Mammary epithelial cell (primary cell): ENCODE measurements at regions of chr12 and their contacts with region 1.

Region 1: GRCh38 chr12:94101738-94102660 is 46.4 kb upstream of the PLXNC1 start:
- DNase-seq: peak; percentile 80
- H3K4me3 ChIP-seq: peak overlapping the region; percentile 50 to 66 (median 59)
- H3K27ac ChIP-seq: no peak overlapping the region
- H3K4me1 ChIP-seq: peaks cover 28% of the 10 kb centered on the region
- H3K27me3 ChIP-seq: no peaks in the 10 kb centered on the region
- CTCF ChIP-seq: peak; percentile 77 to 83

Region 2: DNA sequence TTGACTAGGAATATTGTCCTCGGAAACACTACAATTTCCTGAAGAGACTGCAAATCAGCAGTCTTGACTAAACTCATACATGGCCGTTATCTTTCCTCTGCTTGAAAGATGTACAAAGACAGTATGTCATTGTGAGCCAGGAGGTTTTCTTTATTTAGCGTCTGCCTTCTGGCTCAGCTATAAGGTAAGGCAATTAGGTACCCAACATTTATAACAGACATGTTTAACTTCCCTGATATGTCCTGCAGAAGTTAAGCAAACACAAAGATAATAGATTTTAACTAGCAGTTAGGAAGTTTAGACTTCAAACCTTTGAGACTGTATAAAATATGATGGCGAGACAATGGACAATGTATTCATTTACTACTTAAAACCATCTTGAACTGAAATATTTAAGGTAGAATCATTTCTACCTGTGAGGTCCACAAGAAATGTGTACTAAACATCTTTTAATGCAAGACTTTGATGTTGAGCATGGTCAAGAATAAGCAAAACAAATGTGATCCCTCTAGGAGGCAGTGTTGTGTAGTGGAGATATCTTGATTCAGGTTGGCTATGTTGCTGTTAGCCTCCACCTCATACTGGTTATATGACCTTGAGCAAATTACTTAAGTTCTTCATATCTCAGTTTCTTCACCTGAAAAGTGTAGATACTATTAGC is 1076.7 kb before region 1 on chr12:
- CTCF ChIA-PET with region 1: no interaction called
- dilution Hi-C with region 1: no loop called
- in situ Hi-C with region 1: no loop called
- intact Hi-C with region 1: loop called (anchors 10 kb)
- DNase-seq: peak; percentile 58
- H3K4me3 ChIP-seq: no peak overlapping the region
- H3K27ac ChIP-seq: no peak overlapping the region
- H3K4me1 ChIP-seq: no peaks in the 10 kb centered on the region
- H3K27me3 ChIP-seq: no peaks in the 10 kb centered on the region
- CTCF ChIP-seq: peak; percentile 60 to 79

Region 3: DNA sequence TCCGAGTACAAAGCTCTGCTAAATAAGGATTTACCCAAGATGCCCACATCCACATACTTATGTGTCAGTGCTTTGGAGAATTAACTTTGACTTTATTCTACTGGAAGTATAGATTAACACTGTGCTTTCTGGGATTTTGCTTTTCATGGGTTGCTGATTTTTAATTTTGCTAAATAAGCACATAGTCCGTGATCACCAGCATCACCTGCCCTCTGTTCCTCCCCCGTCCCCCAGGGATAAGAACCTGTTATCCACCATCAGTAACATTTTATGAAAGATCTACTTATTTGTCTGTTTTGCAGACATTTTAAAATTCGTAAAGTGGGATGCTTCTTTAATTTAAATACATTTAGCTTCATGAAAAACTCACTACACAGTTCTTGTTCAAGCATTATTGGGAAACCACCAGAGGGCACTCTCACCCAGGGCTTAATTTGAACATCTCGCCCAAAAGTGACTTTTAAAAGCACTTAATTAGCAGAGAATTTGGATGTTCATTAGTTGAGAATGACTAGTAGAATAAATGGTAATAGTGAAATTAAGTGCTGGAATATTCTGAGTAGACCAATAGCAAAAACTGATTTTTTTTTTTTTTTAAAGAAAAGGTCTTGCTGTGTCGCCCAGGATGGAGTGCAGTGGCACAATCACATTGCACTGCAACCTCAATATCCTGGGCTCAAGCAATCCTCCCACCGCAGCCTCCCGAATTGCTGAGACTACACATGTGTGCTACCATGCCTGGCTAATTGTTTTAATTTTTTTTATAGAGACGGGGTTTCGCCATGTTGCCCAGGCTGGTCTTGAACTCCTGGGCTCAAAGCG is 599.0 kb before region 1 on chr12:
- CTCF ChIA-PET with region 1: interaction called, 11 read pairs
- dilution Hi-C with region 1: no loop called
- in situ Hi-C with region 1: loop called (anchors 5 kb)
- intact Hi-C with region 1: loop called (anchors 2 kb)
- DNase-seq: peak; percentile 9
- H3K4me3 ChIP-seq: no peak overlapping the region
- H3K27ac ChIP-seq: no peak overlapping the region
- H3K4me1 ChIP-seq: no peaks in the 10 kb centered on the region
- H3K27me3 ChIP-seq: no peaks in the 10 kb centered on the region
- CTCF ChIP-seq: peak; percentile 74 to 75

Region 4: GRCh38 chr12:93569656-93570551 is 532.1 kb before region 1 on chr12:
- CTCF ChIA-PET with region 1: interaction called, 3 read pairs
- dilution Hi-C with region 1: no loop called
- in situ Hi-C with region 1: loop called in 1 of 2 experiments (anchors 5 kb)
- intact Hi-C with region 1: loop called (anchors 1 kb)
- DNase-seq: peak; percentile 72
- H3K4me3 ChIP-seq: peak overlapping the region; percentile 74 to 97 (median 84)
- H3K27ac ChIP-seq: peak overlapping the region; percentile 56
- H3K4me1 ChIP-seq: peaks cover 13% of the 10 kb centered on the region
- H3K27me3 ChIP-seq: no peaks in the 10 kb centered on the region
- CTCF ChIP-seq: peak; percentile 46 to 88

Region 5: DNA sequence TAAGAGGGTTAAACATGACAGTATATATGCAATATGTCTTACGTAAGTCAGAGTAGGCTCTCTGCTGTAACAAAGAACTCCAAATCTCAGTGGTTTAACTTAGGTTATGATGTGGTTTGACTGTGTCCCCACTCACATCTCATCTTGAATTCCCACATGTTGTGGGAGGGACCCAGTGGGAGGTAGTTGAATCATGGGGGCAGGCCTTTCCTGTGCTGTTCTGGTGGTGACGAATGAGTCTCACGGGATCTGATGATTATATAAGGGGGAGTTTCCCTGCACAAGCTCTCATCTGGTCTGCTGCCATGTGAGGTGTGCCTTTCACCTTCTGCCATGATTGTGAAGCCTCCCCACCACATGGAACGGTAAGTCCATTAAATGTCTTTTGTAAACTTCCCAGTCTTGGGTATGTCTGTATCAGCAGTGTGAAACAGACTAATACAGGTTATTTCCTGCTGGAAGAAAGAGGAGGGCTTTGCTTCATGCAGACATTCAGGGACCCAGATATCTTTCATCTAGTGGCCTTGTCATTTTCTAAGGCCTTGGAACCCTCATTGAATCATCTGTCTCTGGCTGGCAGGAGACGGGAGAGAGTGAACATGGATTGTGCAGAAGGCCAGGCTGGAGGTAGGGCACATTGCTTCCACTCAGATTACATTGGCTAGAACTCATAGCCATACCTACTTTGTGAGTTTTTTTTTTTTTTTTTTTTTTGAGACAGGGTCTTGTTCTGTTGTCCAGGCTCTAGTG is 328.7 kb before region 1 on chr12:
- CTCF ChIA-PET with region 1: interaction called, 3 read pairs
- dilution Hi-C with region 1: no loop called
- in situ Hi-C with region 1: loop called (anchors 5 to 10 kb)
- intact Hi-C with region 1: no loop called
- DNase-seq: peak; percentile 33
- H3K4me3 ChIP-seq: no peak overlapping the region
- H3K27ac ChIP-seq: no peak overlapping the region
- H3K4me1 ChIP-seq: peaks cover 11% of the 10 kb centered on the region
- H3K27me3 ChIP-seq: no peaks in the 10 kb centered on the region
- CTCF ChIP-seq: no peak

Region 6: DNA sequence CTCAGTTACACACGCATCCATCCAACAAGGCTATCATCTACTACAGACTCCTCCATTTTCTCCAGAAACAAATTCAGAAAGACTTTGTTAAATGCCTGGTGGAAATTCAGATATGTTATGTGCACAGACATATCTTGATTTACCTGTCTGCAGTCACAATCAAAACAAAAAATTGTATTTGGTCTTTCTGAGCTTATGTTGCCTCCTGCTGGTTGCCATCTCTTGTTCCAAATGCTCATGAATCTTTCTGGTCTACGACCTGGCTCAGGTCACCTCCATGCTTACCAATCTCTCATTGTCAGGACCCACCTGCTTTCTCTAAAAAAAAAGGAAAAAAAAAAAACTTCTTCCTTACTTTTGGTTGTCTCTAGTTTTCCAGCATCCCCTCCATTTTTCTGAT is 122.8 kb before region 1 on chr12:
- CTCF ChIA-PET with region 1: no interaction called
- dilution Hi-C with region 1: no loop called
- in situ Hi-C with region 1: no loop called
- intact Hi-C with region 1: loop called (anchors 1 kb)
- DNase-seq: peak; percentile 24
- H3K4me3 ChIP-seq: no peak overlapping the region
- H3K27ac ChIP-seq: no peak overlapping the region
- H3K4me1 ChIP-seq: peaks cover 5% of the 10 kb centered on the region
- H3K27me3 ChIP-seq: no peaks in the 10 kb centered on the region
- CTCF ChIP-seq: peak; percentile 27 to 50